Activated CD4-positive, alpha-beta T cell treated with anti-CD3 and anti-CD28 coated beads for 36 hours (primary cell): ENCODE measurements at regions of chr5 and their contacts with region 1.

Region 1: GRCh38 chr5:91383027-91383955 is at the start of gene ARRDC3:
- DNase-seq: peak; percentile 98
- ATAC-seq: peak; percentile 67
- H3K4me3 Mint-ChIP-seq: peak within 1 kb of the TSS; percentile 98
- H3K27ac Mint-ChIP-seq: peak within 1 kb of the TSS; percentile 96
- H3K4me1 Mint-ChIP-seq: peaks cover 16% of the 10 kb centered on the region
- H3K27me3 Mint-ChIP-seq: no peaks in the 10 kb centered on the region
- total RNA-seq, gene ARRDC3: 21.7 to 21.9 TPM

Region 2: DNA sequence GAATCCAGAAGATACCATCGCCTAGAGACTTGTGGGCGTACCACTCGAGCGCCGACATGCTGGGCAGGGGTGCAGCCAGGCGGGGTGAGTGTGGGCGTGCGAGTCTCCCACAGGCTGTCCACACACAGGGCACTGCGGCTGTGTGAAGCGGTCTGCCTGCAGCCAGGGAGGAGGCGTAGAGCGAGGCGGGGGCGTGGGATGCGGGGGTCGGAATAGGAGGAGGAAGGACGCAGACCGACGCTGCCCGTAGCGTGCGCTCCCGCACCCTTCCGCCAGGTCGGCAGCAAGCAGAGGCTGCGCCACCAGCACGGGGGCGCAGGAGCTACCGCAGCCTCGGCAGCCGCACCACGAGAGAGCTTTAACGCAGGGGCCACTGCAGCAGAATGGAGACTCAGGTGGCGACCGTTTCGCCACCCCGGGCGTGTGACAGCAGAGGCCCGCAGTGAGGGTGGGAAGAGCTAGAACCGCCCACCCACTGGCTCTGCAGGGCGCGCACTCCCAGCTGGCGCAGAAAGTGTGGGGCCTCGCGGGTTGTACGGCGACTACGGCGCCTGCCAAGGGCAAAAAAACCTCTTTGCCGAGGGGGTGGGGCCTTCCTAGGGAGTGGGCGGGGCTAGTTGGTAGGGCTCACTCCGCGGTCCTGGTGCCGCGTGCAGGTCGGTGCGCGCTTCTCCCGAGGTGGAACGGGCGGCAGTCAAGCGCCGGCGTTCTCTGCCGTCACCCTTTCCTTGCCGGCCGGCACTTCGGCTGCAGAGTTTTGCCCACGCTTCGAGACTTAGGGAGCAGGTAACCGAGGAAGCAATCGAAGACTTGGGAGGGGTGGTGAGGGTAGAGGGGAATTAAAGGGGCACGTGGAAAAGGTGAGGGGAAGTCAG is 908.8 kb before region 1 on chr5 and contains the starts of genes MBLAC2 and POLR3G:
- CTCF ChIA-PET with region 1: no interaction called
- POLR2A ChIA-PET with region 1: no interaction called
- intact Hi-C with region 1: loop called in 1 of 2 experiments (anchors 5 kb)
- DNase-seq: peak; percentile 97
- ATAC-seq: peak; percentile 91
- H3K4me3 Mint-ChIP-seq: peak within 1 kb of the TSS; percentile 95
- H3K27ac Mint-ChIP-seq: peak within 1 kb of the TSS; percentile 89
- H3K4me1 Mint-ChIP-seq: peaks cover 36% of the 10 kb centered on the region
- H3K27me3 Mint-ChIP-seq: no peaks in the 10 kb centered on the region
- total RNA-seq, gene MBLAC2: 4.6 to 5.1 TPM
- total RNA-seq, gene POLR3G: 18.4 to 22.7 TPM

Region 3: DNA sequence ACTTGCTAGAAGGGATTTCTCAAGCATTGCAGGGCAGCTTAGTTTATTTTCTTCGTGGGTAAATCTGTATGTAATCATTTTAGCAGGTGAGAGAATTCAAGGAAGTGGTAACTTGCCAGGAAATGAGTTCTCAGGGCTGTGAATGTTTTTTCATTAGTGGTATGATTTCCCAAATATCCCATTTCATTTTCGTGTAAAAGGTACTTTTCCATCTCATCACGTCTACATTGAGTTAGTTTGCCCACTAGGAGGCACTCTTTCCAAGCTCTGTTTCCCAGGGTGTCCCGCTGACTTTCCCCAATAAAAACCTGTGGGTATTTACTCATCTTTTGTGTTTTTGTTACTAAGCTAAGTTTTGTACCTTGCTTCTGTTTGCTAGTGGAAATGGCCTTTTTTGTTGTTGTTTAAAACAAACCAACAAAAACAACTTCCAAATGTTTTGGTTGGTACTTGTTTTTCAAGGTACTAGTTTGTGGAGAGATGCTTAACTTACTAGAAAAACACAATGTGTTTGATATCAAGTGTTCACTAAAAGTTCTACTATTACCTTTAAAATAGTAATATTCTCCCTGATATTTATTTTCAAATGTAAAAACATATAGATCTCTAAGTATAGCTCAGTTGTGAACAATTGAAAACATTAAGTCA is 451.1 kb before region 1 on chr5:
- CTCF ChIA-PET with region 1: interaction called, 62 read pairs
- POLR2A ChIA-PET with region 1: no interaction called
- intact Hi-C with region 1: loop called (anchors 1 to 2 kb)
- DNase-seq: peak; percentile 52
- ATAC-seq: peak; percentile 71
- H3K4me3 Mint-ChIP-seq: no peak overlapping the region
- H3K27ac Mint-ChIP-seq: no peak overlapping the region
- H3K4me1 Mint-ChIP-seq: peaks cover 2% of the 10 kb centered on the region
- H3K27me3 Mint-ChIP-seq: peaks cover 3% of the 10 kb centered on the region

Region 4: DNA sequence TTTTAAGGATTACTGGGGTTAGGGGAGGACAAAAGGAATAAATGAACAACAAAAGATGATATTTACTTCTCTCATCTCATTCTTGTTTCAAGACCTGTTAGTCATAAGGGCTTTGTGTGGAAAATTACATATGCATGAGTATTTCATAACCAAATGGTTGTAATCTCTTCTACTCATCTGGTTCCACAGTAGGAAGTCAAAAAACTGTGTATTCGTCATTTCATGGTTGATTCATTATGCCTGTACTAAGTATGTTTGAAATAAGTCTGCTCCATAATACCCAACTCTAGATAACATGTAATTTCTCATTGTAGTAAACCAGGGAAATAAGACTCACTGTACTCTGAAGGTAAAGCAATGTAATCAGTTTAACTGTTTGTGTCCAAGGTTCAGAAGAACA is 213.0 kb before region 1 on chr5:
- CTCF ChIA-PET with region 1: interaction called, 8 read pairs
- POLR2A ChIA-PET with region 1: interaction called, 3 read pairs
- intact Hi-C with region 1: loop called in 1 of 2 experiments (anchors 1 kb)
- DNase-seq: no peak
- ATAC-seq: peak; percentile 96
- H3K4me3 Mint-ChIP-seq: no peak overlapping the region
- H3K27ac Mint-ChIP-seq: peak overlapping the region; percentile 21
- H3K4me1 Mint-ChIP-seq: peaks cover 19% of the 10 kb centered on the region
- H3K27me3 Mint-ChIP-seq: peaks cover 2% of the 10 kb centered on the region

Region 5: DNA sequence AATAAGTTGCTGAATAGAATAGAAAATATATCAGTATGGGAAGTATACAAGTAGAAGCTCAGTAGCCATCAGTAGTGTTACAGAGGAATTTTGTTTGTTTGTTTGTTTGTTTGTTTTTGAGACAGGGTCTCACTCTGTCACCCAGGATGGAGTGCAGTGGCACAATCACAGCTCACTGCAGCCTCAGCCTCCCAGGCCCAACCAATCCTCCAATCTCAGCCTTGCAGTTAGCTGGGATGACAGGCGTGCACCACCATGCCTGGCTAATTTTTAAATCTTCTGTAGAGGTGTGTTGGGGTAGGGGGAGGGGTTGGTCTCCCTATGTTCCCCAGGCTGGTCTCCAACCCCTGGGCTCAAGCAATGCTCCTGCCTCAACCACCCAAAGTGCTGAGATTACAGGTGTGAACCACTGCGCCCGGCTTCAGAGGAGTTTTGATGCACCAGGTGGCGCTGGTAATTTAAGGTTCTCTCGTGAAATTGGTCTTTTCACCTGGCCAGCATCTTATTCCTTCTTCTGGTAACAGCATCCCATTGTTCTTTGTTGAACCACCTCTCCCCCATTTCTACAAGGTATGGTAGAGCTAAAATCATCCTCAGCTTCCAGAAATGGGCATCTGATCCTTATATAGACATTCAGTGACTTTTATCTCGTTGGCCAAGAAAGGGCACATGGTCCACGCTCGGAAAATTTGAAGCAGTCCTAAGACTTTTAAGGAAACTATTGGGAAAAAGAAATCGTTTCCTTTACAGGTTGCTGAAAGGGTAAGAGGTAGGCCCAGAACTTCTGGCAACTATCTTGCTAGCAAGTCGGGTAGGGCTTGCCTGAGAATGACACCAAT is 157.2 kb before region 1 on chr5:
- CTCF ChIA-PET with region 1: interaction called, 121 read pairs
- POLR2A ChIA-PET with region 1: interaction called, 3 read pairs
- intact Hi-C with region 1: loop called (anchors 1 kb)
- DNase-seq: peak; percentile 79
- ATAC-seq: peak; percentile 75
- H3K4me3 Mint-ChIP-seq: no peak overlapping the region
- H3K27ac Mint-ChIP-seq: no peak overlapping the region
- H3K4me1 Mint-ChIP-seq: no peaks in the 10 kb centered on the region
- H3K27me3 Mint-ChIP-seq: peaks cover 7% of the 10 kb centered on the region

Region 6: DNA sequence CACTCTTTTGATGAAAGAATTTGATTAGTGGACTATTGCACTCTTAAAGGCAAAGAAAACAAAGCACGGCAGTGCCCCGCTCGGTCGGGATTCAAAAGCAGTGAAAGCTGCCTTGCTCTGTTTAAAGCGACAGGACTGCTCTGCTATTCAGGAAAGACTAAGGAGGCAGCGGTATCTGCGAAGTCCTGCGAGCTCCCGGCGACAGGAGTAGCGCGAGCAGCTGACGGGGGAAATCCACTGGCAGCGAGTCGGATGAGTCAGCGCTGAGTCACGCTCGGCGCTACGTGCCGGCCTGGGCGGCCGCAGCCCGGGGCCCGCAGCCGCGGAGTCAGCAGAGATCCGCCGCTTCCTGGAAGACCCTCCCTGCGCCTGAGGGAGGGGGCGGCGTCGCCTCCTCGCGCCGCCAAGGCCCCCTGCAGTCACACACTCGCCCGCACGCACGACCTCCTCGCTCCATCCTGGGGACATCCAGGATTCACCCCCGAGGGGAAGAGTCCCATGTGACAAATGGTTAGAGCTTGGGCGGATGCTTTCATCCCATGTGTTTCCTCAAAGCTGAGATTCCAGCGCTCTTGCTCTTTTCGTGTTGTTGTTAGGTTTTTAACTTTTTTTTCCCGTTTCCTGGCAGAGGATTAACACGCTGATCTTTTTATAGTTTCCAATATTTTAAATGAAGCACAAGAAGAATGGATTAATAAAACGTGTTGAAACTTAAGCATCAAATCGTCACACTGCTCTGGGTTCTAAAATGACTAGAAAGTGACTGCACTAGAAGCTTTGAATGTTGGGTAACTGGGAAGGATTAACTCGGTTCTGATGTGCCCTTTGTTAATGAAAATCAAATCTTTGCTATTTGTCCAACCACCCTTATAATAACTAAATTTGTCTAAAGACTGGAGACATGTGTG is 102.7 kb before region 1 on chr5:
- CTCF ChIA-PET with region 1: interaction called, 27 read pairs
- POLR2A ChIA-PET with region 1: interaction called, 17 read pairs
- intact Hi-C with region 1: loop called (anchors 1 kb)
- DNase-seq: peak; percentile 97
- ATAC-seq: peak; percentile 80
- H3K4me3 Mint-ChIP-seq: peak overlapping the region; percentile 76
- H3K27ac Mint-ChIP-seq: peak overlapping the region; percentile 99
- H3K4me1 Mint-ChIP-seq: peaks cover 53% of the 10 kb centered on the region
- H3K27me3 Mint-ChIP-seq: no peaks in the 10 kb centered on the region